Calu3 (cell line): ENCODE measurements at regions of chrX and their contacts with region 1.

Region 1: DNA sequence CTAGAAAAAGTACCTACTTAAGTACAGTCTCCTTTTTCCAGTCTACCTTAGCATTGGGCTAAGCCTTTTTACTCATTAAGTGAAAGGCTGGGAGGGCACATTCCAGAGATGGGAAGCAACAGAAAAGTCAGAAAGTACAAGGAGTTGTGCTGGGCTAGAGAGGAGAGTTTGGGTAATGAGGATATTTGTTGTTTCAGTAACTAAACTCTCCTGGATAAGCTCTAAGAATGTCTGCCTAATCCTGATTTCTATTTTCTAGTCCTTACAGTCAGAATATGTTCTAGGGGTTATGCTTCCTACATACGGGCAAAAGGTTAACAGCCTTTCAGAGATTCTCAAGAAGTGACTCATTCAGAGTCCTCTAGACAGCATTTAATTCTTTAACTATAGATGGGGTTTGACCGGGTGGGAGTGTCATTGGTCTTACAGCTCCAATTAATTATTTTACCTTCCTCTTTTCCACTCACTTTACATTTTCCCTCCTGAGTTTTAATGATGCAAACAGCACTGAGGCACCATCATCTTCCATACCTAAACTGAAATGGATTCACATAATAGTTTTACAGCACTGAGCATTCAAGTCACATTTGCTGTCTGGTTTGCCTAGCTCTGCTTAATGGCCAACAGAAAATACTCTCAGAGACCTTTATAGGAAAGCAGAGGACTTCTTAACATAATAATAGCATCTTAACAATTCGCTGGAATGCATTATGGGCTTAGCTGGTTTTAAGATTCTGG is 42.9 kb downstream of the USP26 start:
- DNase-seq: no peak
- H3K4me3 Mint-ChIP-seq: no peak overlapping the region
- H3K27ac Mint-ChIP-seq: peak overlapping the region; percentile 87
- H3K4me1 Mint-ChIP-seq: peaks cover 53% of the 10 kb centered on the region
- H3K27me3 Mint-ChIP-seq: no peaks in the 10 kb centered on the region
- CTCF ChIP-seq: no peak

Region 2: DNA sequence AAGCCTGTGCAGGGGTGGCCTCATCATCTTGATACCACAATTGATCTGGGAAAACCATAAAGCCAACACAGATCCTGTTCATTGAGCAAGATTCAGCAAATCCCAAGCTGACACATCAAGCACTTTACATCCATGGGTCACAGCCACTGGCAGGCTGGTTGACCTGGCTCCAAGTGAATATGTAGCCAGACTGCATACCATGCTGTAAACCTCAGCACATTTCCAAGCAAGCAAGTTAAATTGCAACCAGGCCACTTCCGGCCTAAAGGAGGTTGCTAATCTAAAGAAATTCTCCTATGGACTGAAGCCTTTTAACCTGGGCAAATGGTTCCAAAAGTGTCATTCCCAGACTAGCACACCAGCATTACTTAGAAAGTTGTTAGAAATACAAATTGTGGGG is 97.3 kb after region 1 on chrX:
- CTCF ChIA-PET with region 1: no interaction called
- intact Hi-C with region 1: loop called (anchors 5 kb)
- DNase-seq: peak; percentile 65
- H3K4me3 Mint-ChIP-seq: no peak overlapping the region
- H3K27ac Mint-ChIP-seq: peak overlapping the region; percentile 85
- H3K4me1 Mint-ChIP-seq: peaks cover 20% of the 10 kb centered on the region
- H3K27me3 Mint-ChIP-seq: no peaks in the 10 kb centered on the region
- CTCF ChIP-seq: no peak